ENCODE measurements at regions of chr15 and their contacts with region 1.

Region 1: GRCh38 chr15:68368731-68369435 is 63.1 kb downstream of the ITGA11 start:
- DNase-seq: no peak
- ATAC-seq: no peak
- H3K4me3 ChIP-seq: no peak overlapping the region
- H3K4me3 Mint-ChIP-seq: peak overlapping the region in 1 of 10 donors; percentile 6
- H3K27ac ChIP-seq: no peak overlapping the region
- H3K27ac Mint-ChIP-seq: peak overlapping the region in 1 of 9 donors; percentile 45
- H3K4me1 ChIP-seq: no peaks in the 10 kb centered on the region
- H3K4me1 Mint-ChIP-seq: peaks cover 0 to 26% (median 4%) of the 10 kb centered on the region in 7 donors
- H3K27me3 ChIP-seq: no peaks in the 10 kb centered on the region
- H3K27me3 Mint-ChIP-seq: peaks cover 0 to 4% (median 0%) of the 10 kb centered on the region in 5 donors

Region 2: GRCh38 chr15:68316061-68316804 is 52.6 kb before region 1 on chr15:
- CTCF ChIA-PET with region 1: interaction called, 3 read pairs
- POLR2A ChIA-PET with region 1: interaction called, 10 read pairs
- intact Hi-C with region 1: no loop called
- DNase-seq: peak in 1 of 9 donors; percentile 3
- ATAC-seq: no peak
- H3K4me3 ChIP-seq: no peak overlapping the region
- H3K4me3 Mint-ChIP-seq: no peak overlapping the region
- H3K27ac ChIP-seq: no peak overlapping the region
- H3K27ac Mint-ChIP-seq: no peak overlapping the region
- H3K4me1 ChIP-seq: no peaks in the 10 kb centered on the region
- H3K4me1 Mint-ChIP-seq: peaks cover 0 to 6% (median 0%) of the 10 kb centered on the region in 7 donors
- H3K27me3 ChIP-seq: no peaks in the 10 kb centered on the region
- H3K27me3 Mint-ChIP-seq: peaks cover 0 to 5% (median 0%) of the 10 kb centered on the region in 5 donors

Region 3: GRCh38 chr15:68413363-68414205 is 44.7 kb after region 1 on chr15:
- CTCF ChIA-PET with region 1: no interaction called
- POLR2A ChIA-PET with region 1: no interaction called
- intact Hi-C with region 1: no loop called
- DNase-seq: peak in 1 of 9 donors; percentile 7
- ATAC-seq: no peak
- H3K4me3 ChIP-seq: no peak overlapping the region
- H3K4me3 Mint-ChIP-seq: no peak overlapping the region
- H3K27ac ChIP-seq: no peak overlapping the region
- H3K27ac Mint-ChIP-seq: no peak overlapping the region
- H3K4me1 ChIP-seq: no peaks in the 10 kb centered on the region
- H3K4me1 Mint-ChIP-seq: no peaks in the 10 kb centered on the region
- H3K27me3 ChIP-seq: no peaks in the 10 kb centered on the region
- H3K27me3 Mint-ChIP-seq: peaks cover 0 to 2% (median 0%) of the 10 kb centered on the region in 5 donors